Activated CD8-positive, alpha-beta T cell treated with anti-CD3 and anti-CD28 coated beads for 36 hours (primary cell): ENCODE measurements at regions of chr14 and their contacts with region 1.

Region 1: DNA sequence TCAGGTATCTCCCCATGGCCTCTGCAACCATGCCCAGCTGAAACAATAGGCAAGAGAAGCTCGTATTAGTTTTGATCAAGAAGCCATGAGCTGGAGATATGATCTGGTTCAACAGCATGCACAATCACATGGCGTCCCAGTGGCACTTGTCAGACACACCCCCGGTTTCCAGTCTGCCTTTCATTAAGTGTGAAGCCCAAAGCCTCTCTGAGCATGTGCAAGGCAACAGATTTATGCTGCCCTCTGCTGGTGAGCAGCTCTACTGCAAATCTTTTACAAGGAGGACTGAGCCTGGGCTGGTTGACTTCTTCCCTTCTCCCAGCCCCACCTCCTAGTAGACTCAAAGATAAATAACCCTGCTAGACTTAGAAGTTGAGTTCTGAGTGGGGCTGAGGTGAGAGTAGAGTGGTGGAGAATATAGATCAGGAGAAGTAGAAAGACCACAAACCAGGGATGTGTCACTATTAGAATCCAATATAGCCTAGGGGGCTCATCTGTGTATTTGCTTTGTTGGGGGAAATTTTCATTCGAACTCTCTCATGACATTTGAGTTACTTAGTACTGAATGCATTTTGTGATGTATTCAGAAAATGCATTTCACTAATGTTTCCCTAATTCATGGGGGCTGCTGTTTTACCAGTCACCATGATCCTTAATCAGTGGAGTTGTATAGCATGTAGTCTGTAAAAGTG is 53.7 kb upstream of the MBIP start:
- DNase-seq: peak; percentile 85
- ATAC-seq: peak; percentile 82
- H3K4me3 Mint-ChIP-seq: no peak overlapping the region
- H3K27ac Mint-ChIP-seq: no peak overlapping the region
- H3K4me1 Mint-ChIP-seq: no peaks in the 10 kb centered on the region
- H3K27me3 Mint-ChIP-seq: no peaks in the 10 kb centered on the region
- CTCF ChIP-seq: peak; percentile 74

Region 2: DNA sequence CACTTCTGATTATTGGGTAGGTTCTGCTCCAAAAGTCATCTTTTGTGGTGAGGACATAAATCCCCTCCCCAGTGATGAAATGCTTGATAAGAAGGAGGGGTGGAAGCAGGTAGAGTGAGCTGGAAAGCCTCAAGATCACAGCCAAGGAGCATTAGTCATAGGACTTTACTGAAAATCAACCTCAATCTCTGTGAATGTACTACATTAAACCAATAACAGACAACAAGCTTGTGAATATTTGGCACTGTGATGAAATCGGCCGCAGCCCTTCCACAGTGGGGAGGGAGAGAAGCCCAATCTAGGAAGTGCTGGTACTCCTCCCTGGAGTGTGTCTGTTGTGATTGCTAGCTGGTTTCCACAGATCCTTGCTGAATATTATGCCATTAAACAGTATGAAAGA is 156.4 kb before region 1 on chr14:
- CTCF ChIA-PET with region 1: no interaction called
- POLR2A ChIA-PET with region 1: no interaction called
- intact Hi-C with region 1: loop called (anchors 10 kb)
- DNase-seq: no peak
- ATAC-seq: peak; percentile 42
- H3K4me3 Mint-ChIP-seq: no peak overlapping the region
- H3K27ac Mint-ChIP-seq: no peak overlapping the region
- H3K4me1 Mint-ChIP-seq: peaks cover 3% of the 10 kb centered on the region
- H3K27me3 Mint-ChIP-seq: peaks cover 28% of the 10 kb centered on the region
- CTCF ChIP-seq: no peak

Region 3: DNA sequence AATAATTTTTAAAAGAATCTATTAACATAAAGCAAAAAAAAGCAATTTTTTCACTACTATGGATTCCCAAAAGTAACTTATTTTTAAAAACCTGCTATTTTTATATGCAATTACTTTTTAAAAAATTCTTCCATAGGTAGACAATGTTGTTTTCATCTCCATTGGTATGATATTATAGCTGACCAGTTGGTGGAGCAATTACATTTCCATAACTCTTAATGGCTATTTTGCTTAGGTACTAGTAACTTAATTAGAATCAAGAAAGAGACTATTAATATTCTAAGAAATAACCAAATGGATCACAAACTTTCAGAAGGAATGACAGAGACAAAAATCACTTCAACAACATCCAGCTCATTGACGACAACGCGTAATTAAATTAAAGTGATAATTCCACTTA is 132.9 kb before region 1 on chr14:
- CTCF ChIA-PET with region 1: interaction called, 10 read pairs
- POLR2A ChIA-PET with region 1: no interaction called
- intact Hi-C with region 1: loop called (anchors 5 kb)
- DNase-seq: no peak
- ATAC-seq: no peak
- H3K4me3 Mint-ChIP-seq: no peak overlapping the region
- H3K27ac Mint-ChIP-seq: no peak overlapping the region
- H3K4me1 Mint-ChIP-seq: peaks cover 3% of the 10 kb centered on the region
- H3K27me3 Mint-ChIP-seq: peaks cover 17% of the 10 kb centered on the region
- CTCF ChIP-seq: no peak

Region 4: GRCh38 chr14:36315159-36315853 is 58.8 kb before region 1 on chr14:
- CTCF ChIA-PET with region 1: interaction called, 4 read pairs
- POLR2A ChIA-PET with region 1: no interaction called
- intact Hi-C with region 1: loop called (anchors 5 kb)
- DNase-seq: peak; percentile 83
- ATAC-seq: peak; percentile 85
- H3K4me3 Mint-ChIP-seq: peak overlapping the region; percentile 33
- H3K27ac Mint-ChIP-seq: peak overlapping the region; percentile 96
- H3K4me1 Mint-ChIP-seq: peaks cover 43% of the 10 kb centered on the region
- H3K27me3 Mint-ChIP-seq: no peaks in the 10 kb centered on the region
- CTCF ChIP-seq: no peak